Left ventricle myocardium superior (tissue), 1 donor: ENCODE measurements at regions of chr1 and their contacts with region 1.

Region 1: GRCh38 chr1:66725885-66726665 is 26.2 kb upstream of the DYNLT5 start:
- DNase-seq: no peak
- ATAC-seq: peak; percentile 83

Region 2: GRCh38 chr1:66253330-66253921 is 472.6 kb before region 1 on chr1:
- intact Hi-C with region 1: loop called (anchors 10 kb)
- DNase-seq: no peak
- ATAC-seq: peak; percentile 90

Region 3: GRCh38 chr1:66294692-66295384 is 431.2 kb before region 1 on chr1:
- intact Hi-C with region 1: no loop called
- DNase-seq: no peak
- ATAC-seq: peak; percentile 70

Region 4: GRCh38 chr1:66490816-66491215 is 235.3 kb before region 1 on chr1:
- intact Hi-C with region 1: no loop called
- DNase-seq: no peak
- ATAC-seq: peak; percentile 63

Region 5: GRCh38 chr1:66618390-66618789 is 107.7 kb before region 1 on chr1:
- intact Hi-C with region 1: no loop called
- DNase-seq: no peak
- ATAC-seq: no peak

Region 6: GRCh38 chr1:66764994-66765578 is 39.0 kb after region 1 on chr1:
- intact Hi-C with region 1: no loop called
- DNase-seq: no peak
- ATAC-seq: peak; percentile 46